PC-9 (cell line): ENCODE measurements at regions of chr2 and their contacts with region 1.

Region 1: GRCh38 chr2:221573430-221574230 is 1.5 kb upstream of the EPHA4 start:
- DNase-seq: peak; percentile 79 to 96
- H3K4me3 ChIP-seq: peak overlapping the region; percentile 87
- H3K27ac ChIP-seq: peak overlapping the region; percentile 51; the same call in 1 of the 2 replicates
- H3K4me1 ChIP-seq: peaks cover 15% of the 10 kb centered on the region
- H3K27me3 ChIP-seq: no peaks in the 10 kb centered on the region
- CTCF ChIP-seq: peak; percentile 100

Region 2: DNA sequence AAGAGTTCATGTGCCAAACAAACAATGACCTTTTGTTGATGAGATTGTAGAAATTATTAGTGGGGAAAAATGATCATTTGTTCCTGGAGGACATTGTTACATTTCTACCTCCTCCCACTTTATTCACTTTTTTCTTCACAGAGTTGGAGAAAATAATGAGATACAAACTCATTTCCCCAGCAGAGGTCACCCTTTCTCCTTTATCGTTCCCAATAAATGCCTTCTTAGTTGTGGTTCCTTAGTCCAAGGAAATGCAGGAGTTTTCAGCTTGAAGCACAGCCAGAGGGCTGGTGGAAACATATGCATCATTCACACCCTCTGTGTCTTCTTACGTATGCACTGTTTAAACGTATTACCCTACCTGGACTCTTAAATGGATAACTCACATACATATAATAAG is 1837.4 kb before region 1 on chr2:
- CTCF ChIA-PET with region 1: no interaction called
- POLR2A ChIA-PET with region 1: no interaction called
- intact Hi-C with region 1: loop called (anchors 1 kb)
- DNase-seq: peak; percentile 31 to 56
- H3K4me3 ChIP-seq: no peak overlapping the region
- H3K27ac ChIP-seq: no peak overlapping the region
- H3K4me1 ChIP-seq: no peaks in the 10 kb centered on the region
- H3K27me3 ChIP-seq: no peaks in the 10 kb centered on the region
- CTCF ChIP-seq: peak; percentile 73

Region 3: DNA sequence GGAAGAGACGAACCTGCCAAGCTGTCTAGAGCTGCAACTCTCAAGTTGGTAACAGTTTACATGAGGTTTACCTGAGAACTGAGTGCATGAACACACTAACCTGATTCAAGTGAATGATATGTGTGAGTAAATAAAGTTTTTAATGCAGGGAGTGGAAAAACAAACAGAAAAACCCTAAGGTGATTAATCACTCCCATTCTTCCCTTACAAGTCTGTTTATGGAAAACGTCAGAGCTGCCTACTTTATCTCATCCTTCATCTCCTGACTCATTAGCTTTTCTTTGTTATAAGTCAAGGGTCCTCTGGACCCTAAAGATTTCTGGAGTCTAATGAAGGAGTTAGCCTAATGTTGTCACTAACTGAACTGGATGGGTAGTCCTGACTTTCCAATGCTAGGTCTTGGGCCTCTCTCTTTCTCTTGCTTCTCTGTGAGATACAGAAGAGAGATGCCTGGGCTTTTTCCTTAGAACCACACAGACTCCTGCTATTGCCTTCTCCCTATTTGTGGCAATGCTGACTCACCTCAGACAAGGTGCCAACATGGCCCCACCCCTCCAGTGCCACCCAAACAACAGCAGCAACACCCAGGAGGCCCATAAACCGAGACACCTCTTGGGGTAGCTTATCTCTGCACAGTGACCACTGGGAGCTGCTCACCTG is 953.9 kb before region 1 on chr2:
- CTCF ChIA-PET with region 1: no interaction called
- POLR2A ChIA-PET with region 1: no interaction called
- intact Hi-C with region 1: loop called (anchors 5 kb)
- DNase-seq: peak; percentile 77 to 96
- H3K4me3 ChIP-seq: peak overlapping the region; percentile 28; the same call in 1 of the 2 replicates
- H3K27ac ChIP-seq: peak overlapping the region; percentile 93
- H3K4me1 ChIP-seq: peaks cover 39% of the 10 kb centered on the region
- H3K27me3 ChIP-seq: no peaks in the 10 kb centered on the region
- CTCF ChIP-seq: no peak

Region 4: GRCh38 chr2:221330436-221330835 is 243.2 kb before region 1 on chr2:
- CTCF ChIA-PET with region 1: no interaction called
- POLR2A ChIA-PET with region 1: no interaction called
- intact Hi-C with region 1: loop called (anchors 2 kb)
- DNase-seq: peak in 1 of 2 experiments; percentile 19
- H3K4me3 ChIP-seq: no peak overlapping the region
- H3K27ac ChIP-seq: no peak overlapping the region
- H3K4me1 ChIP-seq: no peaks in the 10 kb centered on the region
- H3K27me3 ChIP-seq: no peaks in the 10 kb centered on the region
- CTCF ChIP-seq: no peak

Region 5: GRCh38 chr2:221478485-221478863 is 95.2 kb before region 1 on chr2:
- CTCF ChIA-PET with region 1: interaction called, 5 read pairs
- POLR2A ChIA-PET with region 1: no interaction called
- intact Hi-C with region 1: loop called (anchors 1 kb)
- DNase-seq: peak; percentile 48 to 55
- H3K4me3 ChIP-seq: no peak overlapping the region
- H3K27ac ChIP-seq: no peak overlapping the region
- H3K4me1 ChIP-seq: peaks cover 17% of the 10 kb centered on the region
- H3K27me3 ChIP-seq: no peaks in the 10 kb centered on the region
- CTCF ChIP-seq: peak; percentile 40; the same call in 1 of the 2 replicates

Region 6: DNA sequence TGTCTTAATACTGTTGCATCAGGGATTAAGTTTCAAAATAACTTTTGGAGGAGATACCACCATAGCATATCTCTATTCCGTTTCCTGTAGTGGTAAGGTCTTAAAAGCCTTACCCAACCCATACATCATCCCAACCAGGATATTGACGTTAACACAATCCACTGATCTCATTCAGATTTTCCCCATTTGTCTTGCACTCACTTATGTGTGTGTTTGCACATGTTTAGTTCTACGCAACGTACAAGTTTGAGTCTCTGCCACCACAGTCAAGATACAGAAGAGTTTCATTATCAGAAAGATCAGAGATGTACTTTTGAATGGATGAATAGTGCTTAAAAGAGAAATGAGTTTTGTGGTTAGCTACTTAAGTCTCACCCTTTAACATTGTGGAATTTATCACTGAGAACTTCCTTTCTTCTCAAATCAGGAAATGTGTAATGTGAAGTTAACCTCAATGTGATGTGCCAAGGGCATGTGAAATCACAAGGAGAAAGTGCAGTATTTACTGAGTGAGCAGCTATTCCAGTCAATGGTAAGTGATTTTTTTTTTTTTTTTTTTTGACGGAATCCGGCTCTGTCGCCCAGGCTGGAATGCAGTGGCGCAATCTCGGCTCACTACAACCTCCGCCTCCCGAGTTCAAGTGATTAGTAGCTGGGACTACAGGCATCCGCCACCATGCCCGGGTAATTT is 67.7 kb after region 1 on chr2:
- CTCF ChIA-PET with region 1: interaction called, 3 read pairs
- POLR2A ChIA-PET with region 1: no interaction called
- intact Hi-C with region 1: loop called (anchors 2 kb)
- DNase-seq: peak; percentile 78 to 85
- H3K4me3 ChIP-seq: no peak overlapping the region
- H3K27ac ChIP-seq: no peak overlapping the region
- H3K4me1 ChIP-seq: no peaks in the 10 kb centered on the region
- H3K27me3 ChIP-seq: no peaks in the 10 kb centered on the region
- CTCF ChIP-seq: no peak

Region 7: GRCh38 chr2:221716426-221717303 is 143.0 kb after region 1 on chr2:
- CTCF ChIA-PET with region 1: no interaction called
- POLR2A ChIA-PET with region 1: no interaction called
- intact Hi-C with region 1: no loop called
- DNase-seq: peak in 1 of 2 experiments; percentile 81
- H3K4me3 ChIP-seq: peak overlapping the region; percentile 2; the same call in 1 of the 2 replicates
- H3K27ac ChIP-seq: peak overlapping the region; percentile 9
- H3K4me1 ChIP-seq: peaks cover 21% of the 10 kb centered on the region
- H3K27me3 ChIP-seq: no peaks in the 10 kb centered on the region
- CTCF ChIP-seq: no peak

Region 8: GRCh38 chr2:221969087-221969829 is 395.6 kb after region 1 on chr2:
- CTCF ChIA-PET with region 1: interaction called, 4 read pairs
- POLR2A ChIA-PET with region 1: no interaction called
- intact Hi-C with region 1: loop called (anchors 1 kb)
- DNase-seq: peak; percentile 54 to 61
- H3K4me3 ChIP-seq: no peak overlapping the region
- H3K27ac ChIP-seq: no peak overlapping the region
- H3K4me1 ChIP-seq: peaks cover 34% of the 10 kb centered on the region
- H3K27me3 ChIP-seq: no peaks in the 10 kb centered on the region
- CTCF ChIP-seq: peak; percentile 99

Region 9: DNA sequence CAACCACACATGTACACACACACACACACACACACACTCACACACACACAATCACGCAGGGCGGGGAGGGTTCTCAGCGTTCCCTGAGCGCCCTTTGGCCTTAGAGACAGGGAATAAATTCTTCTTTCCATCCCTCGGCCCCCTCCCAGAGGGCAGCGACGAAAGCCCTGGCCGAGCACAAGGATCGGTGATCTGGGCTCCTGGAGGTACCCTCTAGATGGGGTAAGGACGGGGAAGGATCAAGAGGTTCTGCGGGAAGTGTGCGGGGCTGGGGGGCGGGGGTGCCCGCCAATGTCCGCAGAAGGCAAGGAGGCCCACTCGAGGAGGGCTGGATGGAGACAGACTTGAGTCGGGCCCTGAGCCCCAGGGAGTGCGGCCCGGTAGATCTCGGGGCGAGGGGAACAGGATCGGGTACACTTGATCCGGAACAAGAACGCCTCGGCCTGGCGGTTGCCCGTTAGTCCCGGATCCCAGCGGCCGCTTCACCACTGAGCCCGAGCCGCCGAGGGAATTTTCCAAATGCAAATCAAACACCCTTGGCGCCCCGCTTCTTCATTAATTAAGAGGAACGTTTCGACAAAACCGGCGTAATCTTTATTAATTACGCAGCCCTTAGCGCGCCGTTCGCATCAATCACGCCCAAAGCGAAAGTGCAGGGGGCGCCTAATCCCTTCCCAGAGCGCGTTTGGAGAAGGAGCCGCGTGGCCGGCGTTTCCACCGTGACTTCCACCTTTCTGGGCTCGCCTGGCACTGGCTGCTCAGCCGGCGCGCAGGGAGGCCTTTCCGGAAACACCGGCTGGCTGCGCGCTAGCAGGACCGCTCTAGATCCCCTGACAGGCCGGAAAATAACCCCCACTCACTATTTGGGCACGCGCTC is 732.1 kb after region 1 on chr2:
- CTCF ChIA-PET with region 1: no interaction called
- POLR2A ChIA-PET with region 1: no interaction called
- intact Hi-C with region 1: no loop called
- DNase-seq: no peak
- H3K4me3 ChIP-seq: no peak overlapping the region
- H3K27ac ChIP-seq: no peak overlapping the region
- H3K4me1 ChIP-seq: no peaks in the 10 kb centered on the region
- H3K27me3 ChIP-seq: peaks cover 71% of the 10 kb centered on the region
- CTCF ChIP-seq: no peak